ENCODE measurements at regions of chr9 and their contacts with region 1.

Region 1: GRCh38 chr9:20771729-20772128 is 87.7 kb downstream of the FOCAD start:
- DNase-seq: no peak
- H3K4me3 ChIP-seq: no peak overlapping the region
- H3K27ac ChIP-seq: no peak overlapping the region
- H3K4me1 ChIP-seq: peaks cover 20% of the 10 kb centered on the region
- H3K27me3 ChIP-seq: no peaks in the 10 kb centered on the region
- CTCF ChIP-seq: no peak

Region 2: DNA sequence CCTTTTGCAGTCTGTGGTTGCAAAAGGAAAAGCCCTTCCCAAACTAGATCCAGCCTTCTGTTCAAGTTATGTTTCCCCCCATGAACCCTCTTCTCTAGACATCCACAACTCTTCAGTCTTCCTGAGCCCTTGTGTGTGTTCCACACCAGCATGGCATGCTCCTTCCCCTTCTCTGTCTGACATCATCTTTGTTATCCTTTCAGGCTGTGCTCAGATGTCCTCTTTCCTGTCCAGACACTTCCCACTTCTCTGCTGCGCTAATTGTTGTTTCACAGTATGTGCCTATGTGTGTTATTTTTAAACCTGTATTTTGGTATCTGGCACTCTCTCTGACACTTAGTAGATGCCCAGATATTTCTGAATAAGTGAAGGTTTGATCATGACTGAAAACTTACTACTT is 49.5 kb before region 1 on chr9:
- intact Hi-C with region 1: loop called (anchors 2 kb)
- DNase-seq: no peak
- H3K4me3 ChIP-seq: no peak overlapping the region
- H3K27ac ChIP-seq: peak overlapping the region; percentile 49
- H3K4me1 ChIP-seq: peaks cover 43% of the 10 kb centered on the region
- H3K27me3 ChIP-seq: no peaks in the 10 kb centered on the region
- CTCF ChIP-seq: no peak

Measured in left ventricle myocardium inferior (tissue), 1 donor.